ENCODE measurements at regions of chr2 and their contacts with region 1.

Region 1: DNA sequence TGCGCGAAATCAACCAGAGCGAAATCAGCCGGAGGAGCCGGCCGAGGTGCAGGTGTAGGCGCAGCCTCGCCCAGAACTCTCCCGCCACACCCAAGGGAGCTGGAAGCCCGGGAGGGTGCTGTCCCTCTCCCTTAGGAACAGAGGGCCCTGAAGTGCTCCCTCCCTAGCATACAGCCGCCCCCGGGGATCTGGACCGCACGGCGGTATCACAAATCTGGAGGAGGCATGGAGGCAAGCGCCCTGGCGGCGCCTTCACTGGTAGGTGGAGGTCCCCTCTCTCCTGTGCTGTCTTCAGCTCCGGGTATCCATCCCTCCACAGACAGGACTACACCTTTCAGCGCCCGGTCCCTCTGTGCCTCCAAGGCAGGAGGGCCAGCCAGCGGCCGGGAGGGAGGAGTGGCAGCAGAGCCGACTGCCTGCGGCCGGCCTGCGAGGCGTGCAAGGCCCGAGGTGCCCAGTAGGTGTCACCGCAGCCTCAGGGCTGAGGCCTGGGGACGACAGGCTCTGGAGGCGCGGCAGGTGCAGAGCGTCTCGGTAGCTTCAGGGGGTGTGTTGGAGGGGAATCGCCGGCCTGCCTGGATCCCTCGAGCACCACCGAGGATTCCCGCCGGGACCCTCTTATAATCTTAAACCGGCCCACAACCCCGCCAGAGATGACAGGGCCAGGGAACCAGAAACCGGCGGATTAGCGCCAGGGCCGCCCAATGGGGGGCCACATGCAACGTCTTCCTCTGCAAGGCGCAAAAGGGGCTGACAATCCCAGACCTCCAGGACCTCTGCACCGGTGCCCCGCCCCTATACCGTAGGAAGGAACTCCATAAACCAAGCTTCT is 2.8 kb downstream of the IHH start:
- DNase-seq: peak; percentile 68 to 75 (median 70)
- H3K4me3 ChIP-seq: peak overlapping the region in 1 of 2 donors; percentile 24
- H3K4me3 Mint-ChIP-seq: peak overlapping the region in 7 of 8 donors; percentile 20 to 74 (median 65)
- H3K27ac ChIP-seq: no peak overlapping the region
- H3K27ac Mint-ChIP-seq: peak overlapping the region in 1 of 7 donors; percentile 30
- H3K4me1 ChIP-seq: peaks cover 35% of the 10 kb centered on the region
- H3K4me1 Mint-ChIP-seq: peaks cover 6 to 40% (median 20%) of the 10 kb centered on the region in 4 donors
- H3K27me3 ChIP-seq: peaks cover 40% of the 10 kb centered on the region
- H3K27me3 Mint-ChIP-seq: peaks cover 33 to 45% of the 10 kb centered on the region in 2 donors

Region 2: DNA sequence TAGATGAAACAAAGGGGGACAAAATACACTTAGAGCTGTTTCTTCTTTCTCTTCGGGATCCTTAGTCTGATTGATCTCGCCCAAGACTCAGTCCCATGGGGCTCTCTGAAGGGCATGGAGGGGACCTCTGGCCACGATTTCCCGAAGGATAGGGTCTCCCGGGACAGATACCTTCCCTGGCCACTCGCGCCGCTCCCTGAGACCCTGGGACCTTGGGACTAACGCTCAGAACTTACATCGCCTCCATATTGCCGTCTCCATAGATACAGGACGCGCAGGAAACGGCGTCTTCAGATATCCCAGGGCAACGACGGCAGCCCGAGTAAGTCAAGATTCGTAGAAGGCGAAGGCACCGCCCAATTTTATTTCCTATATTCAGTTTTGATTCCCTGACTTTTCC is 16.7 kb before region 1 on chr2 and contains the start of gene CFAP65:
- CTCF ChIA-PET with region 1: interaction called, 12 read pairs
- POLR2A ChIA-PET with region 1: no interaction called
- intact Hi-C with region 1: no loop called
- DNase-seq: peak in 3 of 5 donors; percentile 25 to 36 (median 29)
- H3K4me3 ChIP-seq: no peak within 1 kb of the TSS
- H3K4me3 Mint-ChIP-seq: peak within 1 kb of the TSS; percentile 14 to 80 (median 71)
- H3K27ac ChIP-seq: no peak within 1 kb of the TSS
- H3K27ac Mint-ChIP-seq: no peak within 1 kb of the TSS
- H3K4me1 ChIP-seq: peaks cover 9% of the 10 kb centered on the region
- H3K4me1 Mint-ChIP-seq: peaks cover 6 to 14% (median 8%) of the 10 kb centered on the region in 4 donors
- H3K27me3 ChIP-seq: peaks cover 15% of the 10 kb centered on the region
- H3K27me3 Mint-ChIP-seq: peaks cover 49 to 56% of the 10 kb centered on the region in 2 donors
- total RNA-seq, gene CFAP65: not detected

Region 3: GRCh38 chr2:219073413-219074129 is 15.6 kb after region 1 on chr2:
- CTCF ChIA-PET with region 1: interaction called, 76 read pairs
- POLR2A ChIA-PET with region 1: no interaction called
- intact Hi-C with region 1: no loop called
- DNase-seq: no peak
- H3K4me3 ChIP-seq: no peak overlapping the region
- H3K4me3 Mint-ChIP-seq: no peak overlapping the region
- H3K27ac ChIP-seq: no peak overlapping the region
- H3K27ac Mint-ChIP-seq: no peak overlapping the region
- H3K4me1 ChIP-seq: no peaks in the 10 kb centered on the region
- H3K4me1 Mint-ChIP-seq: no peaks in the 10 kb centered on the region
- H3K27me3 ChIP-seq: no peaks in the 10 kb centered on the region
- H3K27me3 Mint-ChIP-seq: no peaks in the 10 kb centered on the region

Region 4: DNA sequence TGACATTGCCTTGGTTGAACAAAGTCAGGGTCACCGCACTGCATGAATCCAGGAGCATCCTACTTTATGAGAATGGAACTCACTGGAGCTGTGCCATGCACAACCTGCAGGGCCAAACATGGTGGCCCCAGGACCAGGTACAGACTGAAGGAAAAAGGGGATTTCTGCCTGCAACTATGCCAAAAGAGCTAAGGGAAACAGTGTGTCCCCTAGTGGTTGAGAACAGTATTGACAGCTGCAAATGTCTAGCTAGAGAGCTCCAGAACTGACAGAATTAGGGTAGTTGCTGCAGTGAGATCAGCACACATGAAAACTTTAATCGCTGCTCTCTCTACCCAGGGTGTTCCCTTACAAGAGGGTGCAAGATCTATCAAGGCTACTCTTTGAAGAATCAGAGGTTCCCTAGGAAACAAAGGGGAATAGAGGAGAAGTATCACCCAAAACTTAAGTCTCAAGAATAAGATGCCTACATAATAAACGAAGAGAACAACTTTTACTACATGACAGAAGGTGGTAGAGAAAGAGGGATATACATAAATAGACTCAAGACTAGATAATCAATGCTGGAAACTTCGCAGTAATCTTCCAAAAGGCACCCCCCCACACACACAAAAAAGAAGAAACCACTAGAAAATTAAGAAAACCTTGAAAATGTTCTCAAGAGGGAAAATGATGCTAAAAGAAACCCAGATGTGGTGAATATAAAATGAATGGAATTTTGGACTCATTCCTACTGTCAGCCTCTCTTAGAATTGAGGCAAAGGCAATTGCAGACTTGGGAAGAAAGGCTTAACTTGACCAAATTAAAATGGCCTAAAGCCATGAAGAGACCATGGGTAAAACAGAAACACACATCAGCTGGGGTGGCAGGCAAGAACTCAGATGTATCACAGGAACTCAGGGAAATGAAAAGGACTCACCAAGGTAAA is 46.4 kb after region 1 on chr2:
- CTCF ChIA-PET with region 1: interaction called, 7 read pairs
- POLR2A ChIA-PET with region 1: no interaction called
- intact Hi-C with region 1: loop called (anchors 1 kb)
- DNase-seq: peak in 4 of 5 donors; percentile 9 to 36 (median 20)
- H3K4me3 ChIP-seq: no peak overlapping the region
- H3K4me3 Mint-ChIP-seq: no peak overlapping the region
- H3K27ac ChIP-seq: no peak overlapping the region
- H3K27ac Mint-ChIP-seq: peak overlapping the region in 1 of 7 donors; percentile 37
- H3K4me1 ChIP-seq: peaks cover 4% of the 10 kb centered on the region
- H3K4me1 Mint-ChIP-seq: peaks cover 10 to 24% (median 13%) of the 10 kb centered on the region in 4 donors
- H3K27me3 ChIP-seq: no peaks in the 10 kb centered on the region
- H3K27me3 Mint-ChIP-seq: no peaks in the 10 kb centered on the region

Region 5: GRCh38 chr2:219119422-219120043 is 61.6 kb after region 1 on chr2:
- CTCF ChIA-PET with region 1: interaction called, 76 read pairs
- POLR2A ChIA-PET with region 1: no interaction called
- intact Hi-C with region 1: loop called (anchors 1 kb)
- DNase-seq: peak; percentile 27 to 42 (median 37)
- H3K4me3 ChIP-seq: no peak overlapping the region
- H3K4me3 Mint-ChIP-seq: no peak overlapping the region
- H3K27ac ChIP-seq: no peak overlapping the region
- H3K27ac Mint-ChIP-seq: no peak overlapping the region
- H3K4me1 ChIP-seq: peaks cover 5% of the 10 kb centered on the region
- H3K4me1 Mint-ChIP-seq: peaks cover 7 to 11% (median 8%) of the 10 kb centered on the region in 4 donors
- H3K27me3 ChIP-seq: no peaks in the 10 kb centered on the region
- H3K27me3 Mint-ChIP-seq: no peaks in the 10 kb centered on the region

Region 6: GRCh38 chr2:219218732-219219701 is 161.1 kb after region 1 on chr2 and contains the start of gene ABCB6:
- CTCF ChIA-PET with region 1: interaction called, 4 read pairs
- POLR2A ChIA-PET with region 1: no interaction called
- intact Hi-C with region 1: loop called (anchors 10 kb)
- DNase-seq: peak; percentile 81 to 93 (median 83)
- H3K4me3 ChIP-seq: peak within 1 kb of the TSS; percentile 49 to 68
- H3K4me3 Mint-ChIP-seq: peak within 1 kb of the TSS; percentile 82 to 93 (median 84)
- H3K27ac ChIP-seq: peak within 1 kb of the TSS; percentile 53
- H3K27ac Mint-ChIP-seq: peak within 1 kb of the TSS; percentile 74 to 96 (median 88)
- H3K4me1 ChIP-seq: peaks cover 24% of the 10 kb centered on the region
- H3K4me1 Mint-ChIP-seq: peaks cover 8 to 25% (median 19%) of the 10 kb centered on the region in 4 donors
- H3K27me3 ChIP-seq: no peaks in the 10 kb centered on the region
- H3K27me3 Mint-ChIP-seq: no peaks in the 10 kb centered on the region
- total RNA-seq, gene ABCB6: 10.7 to 11.1 TPM

Region 7: GRCh38 chr2:219352448-219353023 is 294.6 kb after region 1 on chr2:
- CTCF ChIA-PET with region 1: interaction called, 4 read pairs
- POLR2A ChIA-PET with region 1: no interaction called
- intact Hi-C with region 1: loop called (anchors 1 kb)
- DNase-seq: peak; percentile 45 to 62 (median 57)
- H3K4me3 ChIP-seq: no peak overlapping the region
- H3K4me3 Mint-ChIP-seq: no peak overlapping the region
- H3K27ac ChIP-seq: no peak overlapping the region
- H3K27ac Mint-ChIP-seq: no peak overlapping the region
- H3K4me1 ChIP-seq: no peaks in the 10 kb centered on the region
- H3K4me1 Mint-ChIP-seq: peaks cover 0 to 2% (median 0%) of the 10 kb centered on the region in 4 donors
- H3K27me3 ChIP-seq: no peaks in the 10 kb centered on the region
- H3K27me3 Mint-ChIP-seq: peaks cover 32 to 40% of the 10 kb centered on the region in 2 donors